OCI-LY7 (cell line): ENCODE measurements at regions of chr9 and their contacts with region 1.

Region 1: GRCh38 chr9:25964239-25964638 is 286.0 kb upstream of the TUSC1 start:
- DNase-seq: peak; percentile 62
- H3K4me3 ChIP-seq: no peak overlapping the region
- H3K27ac ChIP-seq: no peak overlapping the region
- H3K4me1 ChIP-seq: no peaks in the 10 kb centered on the region
- CTCF ChIP-seq: peak; percentile 76

Region 2: GRCh38 chr9:25418974-25419373 is 545.3 kb before region 1 on chr9:
- CTCF ChIA-PET with region 1: no interaction called
- POLR2A ChIA-PET with region 1: no interaction called
- intact Hi-C with region 1: no loop called
- DNase-seq: no peak
- H3K4me3 ChIP-seq: no peak overlapping the region
- H3K27ac ChIP-seq: no peak overlapping the region
- H3K4me1 ChIP-seq: no peaks in the 10 kb centered on the region
- CTCF ChIP-seq: no peak

Region 3: GRCh38 chr9:25629231-25629630 is 335.0 kb before region 1 on chr9:
- CTCF ChIA-PET with region 1: no interaction called
- POLR2A ChIA-PET with region 1: no interaction called
- intact Hi-C with region 1: no loop called
- DNase-seq: no peak
- H3K4me3 ChIP-seq: no peak overlapping the region
- H3K27ac ChIP-seq: no peak overlapping the region
- H3K4me1 ChIP-seq: no peaks in the 10 kb centered on the region
- CTCF ChIP-seq: no peak

Region 4: DNA sequence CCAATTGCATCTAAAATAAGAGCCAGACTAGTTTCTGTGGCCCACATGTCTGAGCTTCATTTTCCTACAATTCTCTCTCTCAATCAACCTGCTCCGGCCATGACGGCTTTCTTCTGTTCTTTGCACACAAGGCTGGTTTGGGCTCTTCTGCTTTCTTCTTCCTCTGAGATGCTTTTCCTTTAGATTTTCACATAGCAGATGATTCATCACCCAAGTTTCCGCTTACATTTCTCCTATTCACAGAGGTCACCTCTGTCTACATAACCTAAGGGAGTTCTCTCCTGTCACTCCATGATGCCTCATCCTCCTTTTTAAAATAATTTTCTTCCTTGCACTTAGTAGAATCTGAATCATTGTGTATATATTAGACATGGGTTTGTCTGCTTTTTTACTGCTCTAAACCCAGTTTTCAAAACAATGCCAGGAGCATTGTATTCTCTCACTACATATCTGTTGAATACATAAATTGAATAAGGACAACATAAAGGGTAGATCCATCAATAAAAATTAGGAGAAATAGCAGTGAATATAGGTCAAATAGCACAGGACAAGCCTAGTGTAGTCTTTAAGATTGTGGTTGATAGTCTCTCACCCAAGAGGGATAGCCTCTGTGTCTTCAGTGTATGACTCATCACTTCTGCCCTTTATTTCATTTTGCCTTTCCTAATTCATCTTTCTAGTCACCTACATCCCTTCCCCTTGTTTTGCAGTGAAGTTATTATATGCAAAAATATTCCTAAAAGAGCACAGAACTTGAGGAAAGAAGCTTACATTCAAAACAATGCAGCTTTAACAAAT is 48.8 kb after region 1 on chr9:
- CTCF ChIA-PET with region 1: no interaction called
- POLR2A ChIA-PET with region 1: no interaction called
- intact Hi-C with region 1: no loop called
- DNase-seq: no peak
- H3K4me3 ChIP-seq: no peak overlapping the region
- H3K27ac ChIP-seq: no peak overlapping the region
- H3K4me1 ChIP-seq: no peaks in the 10 kb centered on the region
- CTCF ChIP-seq: no peak

Region 5: GRCh38 chr9:26326473-26327044 is 362.3 kb after region 1 on chr9:
- CTCF ChIA-PET with region 1: no interaction called
- POLR2A ChIA-PET with region 1: no interaction called
- intact Hi-C with region 1: loop called (anchors 1 kb)
- DNase-seq: peak; percentile 52
- H3K4me3 ChIP-seq: no peak overlapping the region
- H3K27ac ChIP-seq: no peak overlapping the region
- H3K4me1 ChIP-seq: no peaks in the 10 kb centered on the region
- CTCF ChIP-seq: peak; percentile 91